ENCODE measurements at regions of chr1 and their contacts with region 1.

Region 1: DNA sequence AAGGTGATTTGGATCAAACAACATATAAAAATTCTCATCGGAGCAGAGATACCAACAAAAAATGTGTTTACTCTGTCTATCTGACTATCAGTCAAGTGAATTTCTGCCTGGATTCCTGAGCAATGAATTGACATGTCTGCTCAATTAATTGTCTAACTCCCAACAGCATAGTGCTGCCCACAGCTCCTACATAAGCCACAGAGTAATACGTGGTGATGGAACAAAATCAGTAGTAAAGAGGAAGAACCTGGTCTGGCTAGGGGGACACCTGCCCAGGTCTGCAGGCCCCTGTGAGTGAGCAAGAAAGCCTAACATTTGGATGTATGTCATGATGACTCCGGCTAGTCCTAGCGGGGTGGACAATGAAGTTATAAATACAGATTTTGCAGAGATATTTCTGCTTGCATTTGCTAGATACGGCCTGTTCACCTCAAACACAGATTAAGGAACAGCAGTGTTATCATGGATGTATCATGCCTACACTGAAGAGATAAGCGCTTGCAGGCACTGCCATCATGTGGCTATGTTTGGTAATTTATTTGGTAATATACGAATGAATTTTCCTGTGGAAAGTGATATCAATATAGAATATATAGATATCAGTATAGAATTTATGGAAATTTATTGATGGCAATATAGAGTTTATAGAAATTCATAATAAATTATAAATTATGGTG is 69.6 kb upstream of the LRRC8B start:
- DNase-seq: no peak
- ATAC-seq: peak; percentile 86
- H3K4me3 ChIP-seq: no peak overlapping the region
- H3K27ac ChIP-seq: no peak overlapping the region
- H3K4me1 ChIP-seq: peaks cover 7% of the 10 kb centered on the region; the same call in 1 of the 2 replicates
- H3K27me3 ChIP-seq: no peaks in the 10 kb centered on the region
- CTCF ChIP-seq: peak; percentile 53 to 75 (median 55); a peak in 5 of 6 replicates
- EP300 ChIP-seq: no peak
- POLR2A ChIP-seq: no peak
- RAD21 ChIP-seq: peak; percentile 93

Region 2: GRCh38 chr1:88935522-88936222 is 519.3 kb before region 1 on chr1:
- CTCF ChIA-PET with region 1: no interaction called
- POLR2A ChIA-PET with region 1: no interaction called
- RAD21 ChIA-PET with region 1: interaction called, 3 read pairs
- SMC1A ChIA-PET with region 1: no interaction called
- in situ Hi-C with region 1: no loop called
- intact Hi-C with region 1: loop called (anchors 10 kb)
- DNase-seq: no peak
- ATAC-seq: peak; percentile 75
- H3K4me3 ChIP-seq: no peak overlapping the region
- H3K27ac ChIP-seq: no peak overlapping the region
- H3K4me1 ChIP-seq: no peaks in the 10 kb centered on the region
- H3K27me3 ChIP-seq: no peaks in the 10 kb centered on the region
- CTCF ChIP-seq: peak; percentile 47 to 66 (median 53); a peak in 5 of 6 replicates
- EP300 ChIP-seq: no peak
- POLR2A ChIP-seq: no peak
- RAD21 ChIP-seq: peak; percentile 41; the same call in 1 of the 2 replicates

Region 3: GRCh38 chr1:88973520-88974137 is 481.4 kb before region 1 on chr1:
- CTCF ChIA-PET with region 1: interaction called, 5 read pairs
- POLR2A ChIA-PET with region 1: no interaction called
- RAD21 ChIA-PET with region 1: no interaction called
- SMC1A ChIA-PET with region 1: interaction called, 6 read pairs
- in situ Hi-C with region 1: no loop called
- intact Hi-C with region 1: loop called (anchors 1 kb)
- DNase-seq: no peak
- ATAC-seq: peak; percentile 74
- H3K4me3 ChIP-seq: no peak overlapping the region
- H3K27ac ChIP-seq: no peak overlapping the region
- H3K4me1 ChIP-seq: peaks cover 4% of the 10 kb centered on the region
- H3K27me3 ChIP-seq: no peaks in the 10 kb centered on the region
- CTCF ChIP-seq: peak; percentile 39 to 63 (median 52); a peak in 5 of 6 replicates
- EP300 ChIP-seq: no peak
- POLR2A ChIP-seq: no peak
- RAD21 ChIP-seq: peak; percentile 62

Region 4: DNA sequence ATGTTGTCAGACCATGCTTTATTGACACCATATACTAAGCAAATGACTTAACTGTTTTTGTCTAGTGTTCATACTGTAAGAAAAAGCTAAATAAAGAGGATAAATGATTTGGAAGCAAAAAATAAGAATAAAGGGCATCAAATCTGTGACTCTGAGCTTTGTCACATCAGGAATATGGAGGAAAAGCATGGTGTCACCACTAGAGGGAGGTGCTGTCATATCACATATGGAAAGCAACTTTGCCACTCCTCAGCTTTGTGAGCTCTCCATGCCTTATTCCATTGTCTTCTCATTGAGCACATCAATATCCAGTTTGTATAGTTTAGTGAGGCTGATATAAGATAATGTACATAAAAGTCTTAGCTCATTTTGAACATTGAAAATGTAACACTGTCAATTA is 369.2 kb before region 1 on chr1:
- CTCF ChIA-PET with region 1: interaction called, 27 read pairs
- POLR2A ChIA-PET with region 1: interaction called, 3 read pairs
- RAD21 ChIA-PET with region 1: interaction called, 4 read pairs
- SMC1A ChIA-PET with region 1: interaction called, 5 read pairs
- in situ Hi-C with region 1: no loop called
- intact Hi-C with region 1: loop called (anchors 2 kb)
- DNase-seq: no peak
- ATAC-seq: peak; percentile 71
- H3K4me3 ChIP-seq: no peak overlapping the region
- H3K27ac ChIP-seq: no peak overlapping the region
- H3K4me1 ChIP-seq: no peaks in the 10 kb centered on the region
- H3K27me3 ChIP-seq: no peaks in the 10 kb centered on the region; a peak in 1 of 4 replicates
- CTCF ChIP-seq: peak; percentile 56 to 72 (median 61); a peak in 5 of 6 replicates
- EP300 ChIP-seq: no peak
- POLR2A ChIP-seq: no peak
- RAD21 ChIP-seq: peak; percentile 79